ENCODE measurements at regions of chrX and their contacts with region 1.

Region 1: DNA sequence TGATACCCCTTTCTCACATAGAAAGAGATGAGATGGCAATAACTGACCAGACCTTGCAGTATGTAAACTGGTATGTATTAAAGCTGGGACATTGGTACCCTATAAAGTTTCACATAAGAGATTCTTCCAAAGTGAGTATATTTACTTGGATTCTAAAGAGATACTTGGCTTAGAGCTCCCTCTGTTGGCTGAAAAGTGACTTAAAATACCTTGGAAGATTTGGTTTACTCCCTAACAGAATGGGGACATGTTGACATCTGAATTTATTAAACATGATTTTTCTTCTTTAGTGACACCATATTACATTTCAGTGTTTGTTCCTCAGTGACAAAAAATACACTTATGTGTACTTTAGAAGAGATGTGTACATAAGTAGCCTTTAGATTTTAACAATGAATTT is 47.9 kb upstream of the RGN start:
- DNase-seq: peak in 4 of 7 donors; percentile 23 to 39 (median 34)
- H3K4me3 ChIP-seq: no peak overlapping the region
- H3K27ac ChIP-seq: no peak overlapping the region
- H3K4me1 ChIP-seq: no peaks in the 10 kb centered on the region
- H3K27me3 ChIP-seq: no peaks in the 10 kb centered on the region
- CTCF ChIP-seq: peak; percentile 52 to 71 (median 55)
- POLR2A ChIP-seq: no peak

Region 2: GRCh38 chrX:46903458-46904242 is 126.7 kb before region 1 on chrX:
- intact Hi-C with region 1: loop called in 1 of 2 experiments (anchors 5 kb)
- DNase-seq: peak; percentile 78 to 90 (median 86)
- H3K4me3 ChIP-seq: peak overlapping the region in 1 of 4 donors; percentile 47
- H3K27ac ChIP-seq: peak overlapping the region in 2 of 5 donors; percentile 32 to 54
- H3K4me1 ChIP-seq: no peaks in the 10 kb centered on the region
- H3K27me3 ChIP-seq: peaks cover 7% of the 10 kb centered on the region
- CTCF ChIP-seq: peak; percentile 28 to 85 (median 70)
- POLR2A ChIP-seq: no peak

Region 3: GRCh38 chrX:46912098-46912602 is 118.2 kb before region 1 on chrX and contains the start of gene JADE3:
- intact Hi-C with region 1: loop called in 1 of 2 experiments (anchors 10 kb)
- DNase-seq: peak; percentile 76 to 86 (median 78)
- H3K4me3 ChIP-seq: peak within 1 kb of the TSS; percentile 32 to 66 (median 47)
- H3K27ac ChIP-seq: peak within 1 kb of the TSS in 3 of 5 donors; percentile 67 to 85 (median 73)
- H3K4me1 ChIP-seq: no peaks in the 10 kb centered on the region
- H3K27me3 ChIP-seq: no peaks in the 10 kb centered on the region
- CTCF ChIP-seq: no peak
- POLR2A ChIP-seq: peak in 1 of 2 donors; percentile 71
- total RNA-seq, gene JADE3: 15.7 to 39.5 (median 19.2) TPM

Region 4: GRCh38 chrX:47093248-47093647 is 62.9 kb after region 1 on chrX:
- intact Hi-C with region 1: loop called in 1 of 2 experiments (anchors 10 kb)
- DNase-seq: peak in 1 of 7 donors; percentile 38
- H3K4me3 ChIP-seq: no peak overlapping the region
- H3K27ac ChIP-seq: no peak overlapping the region
- H3K4me1 ChIP-seq: peaks cover 0 to 3% of the 10 kb centered on the region in 2 donors
- H3K27me3 ChIP-seq: no peaks in the 10 kb centered on the region
- CTCF ChIP-seq: peak; percentile 23 to 57 (median 48)
- POLR2A ChIP-seq: no peak

Measured in adrenal gland (tissue), 19 donors.